A549 (cell line): ENCODE measurements at regions of chr3 and their contacts with region 1.

Region 1: DNA sequence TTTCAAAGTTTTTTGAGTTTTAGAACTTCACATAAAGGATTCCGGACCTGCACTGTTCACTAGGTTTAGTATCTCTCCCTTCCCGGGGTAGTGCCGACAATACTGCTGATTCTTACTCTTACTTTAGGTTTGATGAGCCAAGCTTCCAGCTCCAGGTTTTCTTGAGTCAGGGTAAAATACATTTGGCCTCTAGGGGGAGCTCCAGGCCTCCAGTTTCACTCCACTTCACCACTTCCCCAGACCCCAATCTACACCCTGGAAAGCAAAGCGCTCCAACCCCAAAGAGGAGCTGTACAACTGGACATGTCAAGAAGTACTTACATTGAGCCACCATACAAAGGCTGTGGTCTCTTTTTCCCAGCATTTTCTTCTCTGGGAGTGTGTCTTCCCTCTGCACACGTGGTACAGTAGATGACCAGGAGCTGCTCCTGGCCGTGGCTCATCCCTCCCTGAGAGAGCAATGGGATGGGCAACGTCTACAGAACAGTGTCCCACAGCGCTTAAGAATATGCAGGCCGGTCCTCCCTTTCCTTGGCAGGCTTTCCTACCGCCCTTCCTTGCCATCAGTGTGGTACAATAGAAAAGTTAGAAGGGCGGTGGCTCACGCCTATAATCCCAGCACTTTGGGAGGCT is 93.9 kb upstream of the CCDC80 start:
- DNase-seq: peak; percentile 52 to 90
- ATAC-seq: peak; percentile 95 to 96
- H3K4me3 ChIP-seq: no peak overlapping the region
- H3K27ac ChIP-seq: peak overlapping the region; percentile 70 to 82
- H3K4me1 ChIP-seq: peaks cover 35% of the 10 kb centered on the region
- CTCF ChIP-seq: peak; percentile 87
- EP300 ChIP-seq: no peak
- POLR2A ChIP-seq: no peak
- RAD21 ChIP-seq: peak; percentile 95 to 97

Region 2: GRCh38 chr3:112681822-112682325 is 53.0 kb before region 1 on chr3:
- CTCF ChIA-PET with region 1: interaction called, 10 read pairs
- POLR2A ChIA-PET with region 1: interaction called, 4 read pairs
- DNase-seq: no peak
- ATAC-seq: peak in 1 of 2 experiments; percentile 54; a peak in 2 of 6 replicates
- H3K4me3 ChIP-seq: no peak overlapping the region
- H3K27ac ChIP-seq: peak overlapping the region; percentile 58 to 85
- H3K4me1 ChIP-seq: peaks cover 63% of the 10 kb centered on the region
- CTCF ChIP-seq: no peak
- EP300 ChIP-seq: no peak
- POLR2A ChIP-seq: no peak
- RAD21 ChIP-seq: no peak

Region 3: DNA sequence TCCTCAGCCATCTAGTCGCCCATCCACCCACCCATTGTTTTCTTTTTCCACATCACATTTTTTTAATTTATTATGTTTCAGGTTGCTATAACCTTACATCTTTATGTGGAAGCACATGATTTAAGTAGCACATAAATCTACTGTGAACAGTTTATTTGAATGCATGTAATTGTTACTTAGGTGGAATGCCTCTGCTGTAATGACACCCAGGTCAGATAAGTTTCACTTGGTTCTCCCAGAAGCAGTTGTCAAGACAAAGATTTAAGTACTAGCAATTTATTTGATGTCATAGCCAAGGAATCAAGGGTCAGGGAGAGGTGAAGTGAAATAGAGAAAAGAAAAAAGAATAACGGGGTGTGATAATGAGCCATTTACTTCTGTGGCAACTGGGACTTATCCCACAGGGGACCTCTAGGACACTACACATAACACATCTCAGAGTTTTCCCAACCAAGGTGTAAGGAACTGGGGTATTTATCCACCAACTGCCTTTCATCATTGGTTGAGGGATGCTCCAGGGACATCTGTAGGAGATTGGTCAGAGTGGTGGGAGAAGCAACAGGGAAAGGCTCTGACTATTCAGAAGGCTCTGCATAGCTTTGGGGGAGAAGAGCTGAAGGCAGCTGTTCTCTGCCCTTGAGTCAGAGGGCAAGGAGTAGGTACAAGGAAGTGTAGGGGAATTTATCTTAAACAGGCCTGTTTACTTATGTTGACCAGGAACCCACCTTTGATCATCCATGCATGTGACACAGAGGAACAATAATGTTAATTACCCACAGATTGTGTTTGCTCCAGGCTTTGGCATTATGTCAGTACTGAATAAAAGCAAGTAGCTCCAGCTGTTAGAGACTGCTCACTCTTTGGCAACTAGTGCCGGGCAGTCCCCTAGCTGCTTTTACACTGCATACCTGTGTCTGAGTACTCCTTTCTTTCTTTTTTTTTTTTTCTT is 17.0 kb after region 1 on chr3:
- CTCF ChIA-PET with region 1: interaction called, 50 read pairs
- POLR2A ChIA-PET with region 1: no interaction called
- DNase-seq: peak in 1 of 2 experiments; percentile 81
- ATAC-seq: peak; percentile 85 to 91
- H3K4me3 ChIP-seq: no peak overlapping the region
- H3K27ac ChIP-seq: peak overlapping the region; percentile 57 to 74
- H3K4me1 ChIP-seq: peaks cover 50% of the 10 kb centered on the region
- CTCF ChIP-seq: no peak
- EP300 ChIP-seq: peak; percentile 25 to 36; a peak in 1 of 5 replicates
- POLR2A ChIP-seq: no peak
- RAD21 ChIP-seq: no peak; a peak in 1 of 5 replicates

Region 4: DNA sequence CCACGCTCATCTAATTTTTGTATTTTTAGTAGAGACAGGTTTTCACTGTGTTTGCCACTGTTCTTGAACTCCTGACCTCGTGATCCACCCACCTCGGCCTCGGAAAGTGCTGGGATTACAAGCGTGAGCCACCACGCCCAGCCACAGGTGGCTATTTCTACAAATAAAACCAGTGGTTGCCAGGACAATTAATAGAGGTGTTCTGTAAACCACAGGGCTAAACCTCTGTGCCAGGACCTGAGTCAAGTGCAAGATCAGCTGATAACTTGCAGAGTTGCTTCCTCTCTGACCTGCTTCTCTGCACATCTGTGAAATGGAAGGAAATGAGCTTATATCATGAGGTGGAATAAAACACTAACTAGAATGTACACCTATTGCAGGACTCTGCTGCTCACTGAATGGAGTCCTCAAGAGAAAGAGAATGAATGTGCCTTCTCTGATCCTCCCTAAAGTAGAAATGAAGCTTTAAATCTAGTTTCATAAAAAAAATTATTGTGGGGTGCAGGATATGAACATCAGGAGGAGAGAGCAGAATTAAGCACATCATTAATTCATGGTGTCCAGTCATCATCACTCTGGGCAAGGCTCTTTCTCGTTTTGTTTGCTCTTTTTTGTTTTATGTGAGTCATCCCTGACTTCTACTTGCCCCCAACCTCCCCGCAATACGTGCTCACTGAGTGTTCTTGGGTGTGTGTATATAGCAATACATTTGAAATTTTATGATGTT is 39.2 kb after region 1 on chr3:
- CTCF ChIA-PET with region 1: interaction called, 16 read pairs
- POLR2A ChIA-PET with region 1: no interaction called
- DNase-seq: peak; percentile 48 to 91
- ATAC-seq: peak; percentile 81 to 84
- H3K4me3 ChIP-seq: no peak overlapping the region
- H3K27ac ChIP-seq: peak overlapping the region; percentile 87 to 96
- H3K4me1 ChIP-seq: peaks cover 71% of the 10 kb centered on the region
- CTCF ChIP-seq: no peak
- EP300 ChIP-seq: peak; percentile 58 to 66; a peak in 2 of 5 replicates
- POLR2A ChIP-seq: no peak
- RAD21 ChIP-seq: peak in 1 of 2 experiments; percentile 24; a peak in 1 of 5 replicates

Region 5: DNA sequence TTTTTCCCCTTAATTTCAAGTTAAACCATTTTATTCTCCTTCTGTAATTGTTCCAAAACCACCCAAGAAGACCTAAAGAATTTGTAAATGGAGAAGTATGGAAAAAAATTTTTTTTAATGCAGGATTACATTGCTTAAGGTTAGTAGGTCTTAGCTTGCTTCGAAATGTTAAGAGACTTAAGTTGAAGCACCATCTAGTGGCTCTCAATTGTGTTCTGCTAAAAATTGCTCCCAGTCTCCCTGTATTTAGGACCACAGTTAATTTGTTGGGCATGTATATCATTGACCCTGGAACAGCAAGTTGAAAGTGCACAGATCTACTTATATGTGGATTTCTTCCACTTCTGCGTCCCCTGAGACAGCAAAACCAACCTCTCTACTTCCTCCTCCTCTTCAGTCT is 79.4 kb after region 1 on chr3:
- CTCF ChIA-PET with region 1: interaction called, 62 read pairs
- POLR2A ChIA-PET with region 1: interaction called, 12 read pairs
- DNase-seq: peak; percentile 33 to 82
- ATAC-seq: peak; percentile 82 to 93; a peak in 5 of 6 replicates
- H3K4me3 ChIP-seq: no peak overlapping the region
- H3K27ac ChIP-seq: peak overlapping the region; percentile 61 to 79
- H3K4me1 ChIP-seq: peaks cover 40% of the 10 kb centered on the region
- CTCF ChIP-seq: peak; percentile 83
- EP300 ChIP-seq: no peak
- POLR2A ChIP-seq: no peak
- RAD21 ChIP-seq: peak; percentile 90 to 96

Region 6: GRCh38 chr3:112979240-112979832 is 244.5 kb after region 1 on chr3:
- CTCF ChIA-PET with region 1: interaction called, 20 read pairs
- POLR2A ChIA-PET with region 1: interaction called, 5 read pairs
- DNase-seq: peak; percentile 21 to 42
- ATAC-seq: no peak
- H3K4me3 ChIP-seq: no peak overlapping the region
- H3K27ac ChIP-seq: peak overlapping the region; percentile 2 to 25; a peak in 3 of 6 replicates
- H3K4me1 ChIP-seq: peaks cover 8% of the 10 kb centered on the region; the same call in 1 of the 3 replicates
- CTCF ChIP-seq: peak; percentile 83
- EP300 ChIP-seq: no peak
- POLR2A ChIP-seq: no peak
- RAD21 ChIP-seq: peak; percentile 74 to 83